HepG2 (cell line): ENCODE measurements at regions of chr17 and their contacts with region 1.

Region 1: DNA sequence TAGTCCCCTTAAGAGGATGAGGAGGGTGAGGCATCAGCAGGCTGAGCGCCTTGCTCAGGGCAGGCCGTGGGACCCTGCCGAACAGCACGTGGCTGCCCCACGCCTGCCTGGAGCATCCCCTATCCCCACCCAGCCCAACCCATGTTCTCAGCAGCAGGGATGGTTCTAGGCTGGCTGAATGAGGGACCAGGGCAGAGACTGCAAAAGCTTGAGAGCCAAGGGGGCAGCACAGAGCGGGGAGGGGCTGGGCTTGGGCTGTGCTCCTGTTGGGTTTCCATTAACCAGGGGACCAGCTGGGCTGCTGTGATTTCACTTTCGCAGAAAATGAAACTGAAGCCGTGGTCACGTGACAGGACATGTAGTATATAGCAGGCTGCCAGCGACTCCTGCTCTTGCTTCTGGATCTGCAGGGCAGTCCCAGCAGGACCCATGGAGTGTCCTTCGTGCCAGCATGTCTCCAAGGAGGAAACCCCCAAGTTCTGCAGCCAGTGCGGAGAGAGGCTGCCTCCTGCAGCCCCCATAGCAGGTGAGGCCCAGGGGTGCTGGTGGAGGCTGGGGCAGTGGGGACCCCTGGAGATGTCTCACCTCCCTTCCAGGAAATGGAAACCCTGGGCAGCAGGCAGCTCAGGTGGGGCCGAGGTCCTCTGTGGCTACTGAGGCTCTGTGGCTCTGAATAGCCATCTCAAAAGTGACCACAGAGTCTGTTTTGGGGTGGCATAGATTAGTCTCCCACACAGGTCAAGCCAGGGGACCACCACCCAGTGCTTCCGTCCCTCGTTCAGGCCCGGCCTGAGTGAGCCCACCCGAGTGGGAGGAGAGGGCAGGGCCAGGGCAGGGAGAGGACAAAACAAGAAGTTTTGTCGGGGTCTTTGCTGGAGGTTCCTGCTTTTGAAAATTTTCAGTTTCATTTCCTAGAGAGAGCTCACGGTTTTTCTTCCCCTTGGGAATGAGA is 2.9 kb downstream of the RNF213 start:
- DNase-seq: peak; percentile 98
- ATAC-seq: peak; percentile 82
- H3K4me3 ChIP-seq: peak overlapping the region; percentile 68 to 89 (median 75)
- H3K27ac ChIP-seq: peak overlapping the region; percentile 54
- H3K4me1 ChIP-seq: peaks cover 50% of the 10 kb centered on the region
- H3K27me3 ChIP-seq: no peaks in the 10 kb centered on the region; a peak in 1 of 5 replicates
- CTCF ChIP-seq: peak; percentile 71
- EP300 ChIP-seq: 0 out of 4 replicates have a peak, but pooled peaks of 1 of the 2 experiments have one; percentile 9
- POLR2A ChIP-seq: peak; percentile 99 to 100
- RAD21 ChIP-seq: peak; percentile 78

Region 2: DNA sequence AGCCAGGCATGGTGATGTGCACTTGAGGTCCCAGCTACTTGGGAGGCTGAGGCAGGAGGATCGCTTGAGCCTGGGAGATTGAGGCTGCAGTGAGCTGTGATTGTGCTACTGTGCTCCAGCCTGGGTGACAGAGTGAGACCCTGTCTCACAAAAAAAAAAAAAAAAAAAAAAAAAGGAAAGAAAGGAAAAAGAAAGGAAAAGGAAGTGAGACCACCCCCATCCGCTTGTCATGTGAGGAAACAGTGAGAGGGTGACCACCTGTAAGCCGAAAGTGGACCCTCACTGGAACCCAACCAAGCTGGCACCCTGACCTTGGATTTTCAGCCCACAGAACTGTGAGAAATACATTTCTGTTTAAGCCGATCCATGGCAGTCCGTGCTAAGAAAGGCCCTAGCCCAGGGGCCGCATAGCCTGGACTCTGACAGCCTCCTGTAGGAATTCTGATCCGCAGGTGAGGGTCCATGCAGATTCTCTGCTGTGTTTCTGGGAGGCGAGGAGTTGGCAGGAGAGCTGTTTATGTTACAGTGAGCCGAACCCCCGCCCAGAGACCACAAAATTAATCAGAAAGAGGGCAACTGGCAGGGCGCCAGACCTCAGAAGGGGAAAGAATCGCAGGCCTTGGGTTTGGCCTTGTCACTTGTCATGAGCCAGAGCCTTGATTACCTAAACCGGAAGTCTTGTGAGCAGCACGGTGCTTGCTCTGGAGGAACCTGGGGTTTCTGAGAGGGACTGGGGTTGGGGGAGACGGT is 44.3 kb before region 1 on chr17:
- CTCF ChIA-PET with region 1: no interaction called
- POLR2A ChIA-PET with region 1: interaction called, 31 read pairs
- in situ Hi-C with region 1: no loop called
- intact Hi-C with region 1: loop called (anchors 2 kb)
- DNase-seq: peak; percentile 53
- ATAC-seq: peak; percentile 37
- H3K4me3 ChIP-seq: peak overlapping the region; percentile 90 to 100 (median 93)
- H3K27ac ChIP-seq: peak overlapping the region; percentile 80
- H3K4me1 ChIP-seq: peaks cover 26% of the 10 kb centered on the region
- H3K27me3 ChIP-seq: no peaks in the 10 kb centered on the region
- CTCF ChIP-seq: no peak
- EP300 ChIP-seq: no peak
- POLR2A ChIP-seq: no peak
- RAD21 ChIP-seq: no peak